ENCODE measurements at regions of chr15 and their contacts with region 1.

Region 1: GRCh38 chr15:93087825-93088199 is 1.2 kb downstream of the RGMA start:
- DNase-seq: peak; percentile 68 to 87
- ATAC-seq: peak; percentile 61 to 71 (median 69)
- H3K4me3 ChIP-seq: peak overlapping the region; percentile 80
- H3K27ac ChIP-seq: peak overlapping the region; percentile 90
- H3K4me1 ChIP-seq: peaks cover 37% of the 10 kb centered on the region
- H3K27me3 ChIP-seq: peaks cover 0 to 3% (median 0%) of the 10 kb centered on the region in 3 donors
- CTCF ChIP-seq: peak; percentile 95

Region 2: GRCh38 chr15:93035953-93036800 is 51.6 kb before region 1 on chr15:
- intact Hi-C with region 1: loop called (anchors 2 to 5 kb)
- DNase-seq: peak; percentile 35 to 71
- ATAC-seq: peak; percentile 57 to 75 (median 64)
- H3K4me3 ChIP-seq: no peak overlapping the region
- H3K27ac ChIP-seq: no peak overlapping the region
- H3K4me1 ChIP-seq: peaks cover 16% of the 10 kb centered on the region
- H3K27me3 ChIP-seq: no peaks in the 10 kb centered on the region
- CTCF ChIP-seq: peak; percentile 56

Region 3: DNA sequence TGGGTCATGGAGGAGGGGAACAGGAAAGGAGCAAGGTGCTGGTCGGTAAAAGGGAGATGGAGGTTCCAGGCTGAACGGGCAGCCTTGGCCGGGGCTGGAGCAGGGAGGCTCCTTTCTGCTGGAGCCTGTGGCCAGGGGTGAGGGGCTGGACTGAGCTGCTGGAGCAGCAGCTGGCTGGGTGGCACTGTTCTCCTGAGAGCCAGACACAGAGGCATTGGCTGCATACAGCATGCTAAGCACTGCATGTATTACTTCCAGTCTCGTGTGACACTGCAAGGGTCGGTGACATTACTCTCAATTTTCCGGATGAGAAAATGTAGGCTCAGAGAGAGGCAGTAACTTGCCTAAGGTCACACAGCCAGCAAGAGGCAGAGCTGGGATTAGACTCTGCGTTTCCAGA is 41.1 kb before region 1 on chr15:
- intact Hi-C with region 1: no loop called
- DNase-seq: peak in 1 of 2 donors; percentile 43
- ATAC-seq: no peak
- H3K4me3 ChIP-seq: no peak overlapping the region
- H3K27ac ChIP-seq: no peak overlapping the region
- H3K4me1 ChIP-seq: no peaks in the 10 kb centered on the region
- H3K27me3 ChIP-seq: no peaks in the 10 kb centered on the region
- CTCF ChIP-seq: no peak

Region 4: GRCh38 chr15:93060336-93061263 is 27.2 kb before region 1 on chr15:
- intact Hi-C with region 1: no loop called
- DNase-seq: peak in 1 of 2 donors; percentile 42
- ATAC-seq: no peak
- H3K4me3 ChIP-seq: no peak overlapping the region
- H3K27ac ChIP-seq: no peak overlapping the region
- H3K4me1 ChIP-seq: peaks cover 78% of the 10 kb centered on the region
- H3K27me3 ChIP-seq: no peaks in the 10 kb centered on the region
- CTCF ChIP-seq: no peak

Region 5: GRCh38 chr15:93164409-93164808 is 76.6 kb after region 1 on chr15:
- intact Hi-C with region 1: no loop called
- DNase-seq: no peak
- ATAC-seq: no peak
- H3K4me3 ChIP-seq: no peak overlapping the region
- H3K27ac ChIP-seq: no peak overlapping the region
- H3K4me1 ChIP-seq: no peaks in the 10 kb centered on the region
- H3K27me3 ChIP-seq: no peaks in the 10 kb centered on the region
- CTCF ChIP-seq: no peak

Region 6: GRCh38 chr15:93217343-93217742 is 129.5 kb after region 1 on chr15:
- intact Hi-C with region 1: loop called in 1 of 2 experiments (anchors 2 kb)
- DNase-seq: peak; percentile 58 to 81
- ATAC-seq: peak; percentile 86 to 92 (median 88)
- H3K4me3 ChIP-seq: no peak overlapping the region
- H3K27ac ChIP-seq: peak overlapping the region; percentile 77
- H3K4me1 ChIP-seq: peaks cover 29% of the 10 kb centered on the region
- H3K27me3 ChIP-seq: no peaks in the 10 kb centered on the region
- CTCF ChIP-seq: no peak

Region 7: GRCh38 chr15:93467327-93467726 is 379.5 kb after region 1 on chr15:
- intact Hi-C with region 1: loop called in 1 of 2 experiments (anchors 10 kb)
- DNase-seq: peak; percentile 87 to 95
- ATAC-seq: peak; percentile 98 to 100 (median 100)
- H3K4me3 ChIP-seq: no peak overlapping the region
- H3K27ac ChIP-seq: peak overlapping the region; percentile 54
- H3K4me1 ChIP-seq: peaks cover 12% of the 10 kb centered on the region
- H3K27me3 ChIP-seq: no peaks in the 10 kb centered on the region
- CTCF ChIP-seq: no peak

Region 8: GRCh38 chr15:93515256-93516051 is 427.6 kb after region 1 on chr15:
- intact Hi-C with region 1: loop called in 1 of 2 experiments (anchors 5 kb)
- DNase-seq: peak; percentile 55 to 59
- ATAC-seq: peak; percentile 74 to 91 (median 82)
- H3K4me3 ChIP-seq: no peak overlapping the region
- H3K27ac ChIP-seq: peak overlapping the region; percentile 81
- H3K4me1 ChIP-seq: peaks cover 31% of the 10 kb centered on the region
- H3K27me3 ChIP-seq: no peaks in the 10 kb centered on the region
- CTCF ChIP-seq: no peak

Region 9: DNA sequence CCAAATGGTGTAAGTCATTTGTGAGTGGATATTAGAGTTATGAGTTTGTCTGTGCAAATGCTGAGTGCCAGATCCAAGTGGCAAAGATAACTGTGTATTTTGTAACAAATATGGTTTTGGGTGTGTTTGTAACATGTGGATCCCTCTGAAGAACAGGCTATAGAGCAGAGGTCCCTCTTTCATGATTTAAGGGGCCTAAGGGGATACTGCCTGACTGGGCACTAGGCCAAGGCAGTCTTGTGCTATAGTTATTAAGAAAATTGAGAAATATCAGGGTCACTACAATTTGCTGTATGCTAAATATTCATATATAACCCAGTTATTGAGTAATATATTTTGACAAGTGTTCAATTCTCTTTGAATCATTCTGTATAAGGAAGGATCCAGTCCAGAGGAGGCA is 556.8 kb after region 1 on chr15:
- intact Hi-C with region 1: no loop called
- DNase-seq: no peak
- ATAC-seq: no peak
- H3K4me3 ChIP-seq: no peak overlapping the region
- H3K27ac ChIP-seq: no peak overlapping the region
- H3K4me1 ChIP-seq: no peaks in the 10 kb centered on the region
- H3K27me3 ChIP-seq: no peaks in the 10 kb centered on the region
- CTCF ChIP-seq: no peak

Region 10: GRCh38 chr15:94119923-94120775 is 1032.3 kb after region 1 on chr15:
- intact Hi-C with region 1: loop called in 1 of 2 experiments (anchors 5 kb)
- DNase-seq: peak in 1 of 2 donors; percentile 25
- ATAC-seq: peak; percentile 99 to 100 (median 99)
- H3K4me3 ChIP-seq: no peak overlapping the region
- H3K27ac ChIP-seq: peak overlapping the region; percentile 13
- H3K4me1 ChIP-seq: no peaks in the 10 kb centered on the region
- H3K27me3 ChIP-seq: no peaks in the 10 kb centered on the region
- CTCF ChIP-seq: peak; percentile 90